ENCODE measurements at regions of chr9 and their contacts with region 1.

Region 1: GRCh38 chr9:113682297-113682771 is 193.8 kb upstream of the ZNF618 start:
- DNase-seq: peak; percentile 90
- ATAC-seq: peak; percentile 89
- H3K4me3 ChIP-seq: no peak overlapping the region
- H3K27ac ChIP-seq: no peak overlapping the region
- H3K4me1 ChIP-seq: no peaks in the 10 kb centered on the region
- H3K27me3 ChIP-seq: peaks cover 19% of the 10 kb centered on the region
- CTCF ChIP-seq: peak; percentile 83
- POLR2A ChIP-seq: 0 out of 2 replicates have a peak, but pooled peaks have one; percentile 30
- RAD21 ChIP-seq: peak; percentile 71

Region 2: DNA sequence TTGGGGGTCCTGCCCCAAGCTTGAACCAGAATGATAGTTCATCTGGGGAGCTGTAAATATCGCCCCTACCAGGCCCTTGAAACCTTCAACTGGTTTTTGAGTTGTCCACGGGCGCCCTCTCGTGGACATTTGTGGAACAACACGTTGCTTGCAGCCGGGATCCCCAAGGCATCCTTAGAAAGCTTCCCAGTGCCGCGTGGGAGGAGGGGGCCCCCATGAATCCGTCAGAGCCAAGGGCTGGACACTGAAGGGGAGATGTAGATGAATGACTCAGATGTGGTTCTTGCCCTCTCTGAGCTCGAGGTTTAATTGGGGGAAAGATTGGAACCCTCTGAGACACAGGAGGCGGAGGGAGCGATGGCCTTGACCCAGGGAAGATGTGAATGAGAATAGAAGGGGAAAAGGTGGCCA is 608.7 kb after region 1 on chr9:
- CTCF ChIA-PET with region 1: no interaction called
- POLR2A ChIA-PET with region 1: no interaction called
- dilution Hi-C with region 1: no loop called
- in situ Hi-C with region 1: no loop called
- intact Hi-C with region 1: loop called (anchors 10 kb)
- DNase-seq: peak; percentile 67
- ATAC-seq: peak; percentile 75
- H3K4me3 ChIP-seq: no peak overlapping the region
- H3K27ac ChIP-seq: no peak overlapping the region
- H3K4me1 ChIP-seq: peaks cover 9% of the 10 kb centered on the region
- H3K27me3 ChIP-seq: no peaks in the 10 kb centered on the region
- CTCF ChIP-seq: peak; percentile 91
- POLR2A ChIP-seq: no peak
- RAD21 ChIP-seq: peak; percentile 88

Measured in IMR-90 (cell line).